Prostate gland (tissue), 2 donors: ENCODE measurements at regions of chr5 and their contacts with region 1.

Region 1: GRCh38 chr5:14399054-14399692 is 182.4 kb upstream of the OTULINL start:
- DNase-seq: peak; percentile 25
- H3K4me3 ChIP-seq: no peak overlapping the region
- H3K27ac ChIP-seq: no peak overlapping the region
- H3K4me1 ChIP-seq: no peaks in the 10 kb centered on the region
- H3K27me3 ChIP-seq: no peaks in the 10 kb centered on the region
- CTCF ChIP-seq: peak; percentile 39 to 74 (median 63)
- POLR2A ChIP-seq: no peak

Region 2: GRCh38 chr5:14305045-14305444 is 94.1 kb before region 1 on chr5:
- intact Hi-C with region 1: no loop called
- DNase-seq: no peak
- H3K4me3 ChIP-seq: no peak overlapping the region
- H3K27ac ChIP-seq: no peak overlapping the region
- H3K4me1 ChIP-seq: no peaks in the 10 kb centered on the region
- H3K27me3 ChIP-seq: no peaks in the 10 kb centered on the region
- CTCF ChIP-seq: no peak
- POLR2A ChIP-seq: no peak

Region 3: DNA sequence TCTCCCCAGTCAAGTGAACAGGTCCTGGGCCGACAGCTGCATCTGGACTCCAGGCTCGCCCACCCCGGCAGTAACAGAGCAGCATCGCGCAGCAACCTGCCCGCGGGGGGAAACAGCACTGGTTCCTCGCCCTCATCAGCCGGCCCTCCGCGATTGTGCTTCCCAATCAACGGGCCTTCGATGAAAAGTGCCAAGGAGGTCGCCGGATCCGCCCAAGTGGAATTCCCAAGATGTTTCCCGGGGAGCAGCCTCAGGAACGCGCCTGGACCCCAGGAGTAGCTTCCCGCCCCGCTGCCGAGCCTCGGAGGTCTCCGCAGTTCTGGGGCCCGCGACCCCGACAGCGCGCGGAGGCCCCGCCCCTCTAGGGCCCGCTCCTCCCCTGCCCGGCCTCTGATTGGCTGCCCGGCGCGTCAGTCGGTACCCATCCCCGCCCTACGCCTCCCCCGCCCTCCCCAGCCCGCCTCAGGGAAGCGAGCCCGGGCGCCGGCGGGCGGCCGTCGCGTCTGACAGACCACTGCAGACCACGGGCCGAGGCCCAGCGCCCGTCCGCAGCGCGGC is 182.2 kb after region 1 on chr5 and contains the start of gene OTULINL:
- intact Hi-C with region 1: loop called (anchors 5 kb)
- DNase-seq: peak; percentile 86
- H3K4me3 ChIP-seq: peak within 1 kb of the TSS; percentile 89
- H3K27ac ChIP-seq: peak within 1 kb of the TSS; percentile 84 to 88
- H3K4me1 ChIP-seq: no peaks in the 10 kb centered on the region
- H3K27me3 ChIP-seq: no peaks in the 10 kb centered on the region
- CTCF ChIP-seq: no peak
- POLR2A ChIP-seq: peak; percentile 25
- total RNA-seq, gene OTULINL: 12.4 to 20.6 TPM